ENCODE measurements at regions of chr10 and their contacts with region 1.

Region 1: GRCh38 chr10:70146489-70147258 is at the start of gene TYSND1:
- DNase-seq: no peak
- ATAC-seq: peak; percentile 80
- H3K4me3 Mint-ChIP-seq: peak within 1 kb of the TSS; percentile 95
- H3K27ac Mint-ChIP-seq: peak within 1 kb of the TSS; percentile 96
- H3K4me1 Mint-ChIP-seq: peaks cover 27% of the 10 kb centered on the region
- H3K27me3 Mint-ChIP-seq: no peaks in the 10 kb centered on the region
- CTCF ChIP-seq: no peak
- total RNA-seq, gene TYSND1: 18.2 and 22.0 TPM in 2 replicates

Region 2: GRCh38 chr10:69639291-69640195 is 507.1 kb before region 1 on chr10:
- CTCF ChIA-PET with region 1: no interaction called
- POLR2A ChIA-PET with region 1: no interaction called
- intact Hi-C with region 1: loop called (anchors 10 kb)
- DNase-seq: no peak
- ATAC-seq: peak; percentile 50
- H3K4me3 Mint-ChIP-seq: no peak overlapping the region
- H3K27ac Mint-ChIP-seq: no peak overlapping the region
- H3K4me1 Mint-ChIP-seq: no peaks in the 10 kb centered on the region
- H3K27me3 Mint-ChIP-seq: peaks cover 9% of the 10 kb centered on the region
- CTCF ChIP-seq: no peak

Region 3: GRCh38 chr10:70115948-70116682 is 30.6 kb before region 1 on chr10:
- CTCF ChIA-PET with region 1: interaction called, 49 read pairs
- POLR2A ChIA-PET with region 1: interaction called, 15 read pairs
- intact Hi-C with region 1: loop called (anchors 1 kb)
- DNase-seq: peak; percentile 31
- ATAC-seq: peak; percentile 74
- H3K4me3 Mint-ChIP-seq: no peak overlapping the region
- H3K27ac Mint-ChIP-seq: no peak overlapping the region
- H3K4me1 Mint-ChIP-seq: peaks cover 4% of the 10 kb centered on the region
- H3K27me3 Mint-ChIP-seq: no peaks in the 10 kb centered on the region
- CTCF ChIP-seq: peak; percentile 94

Region 4: DNA sequence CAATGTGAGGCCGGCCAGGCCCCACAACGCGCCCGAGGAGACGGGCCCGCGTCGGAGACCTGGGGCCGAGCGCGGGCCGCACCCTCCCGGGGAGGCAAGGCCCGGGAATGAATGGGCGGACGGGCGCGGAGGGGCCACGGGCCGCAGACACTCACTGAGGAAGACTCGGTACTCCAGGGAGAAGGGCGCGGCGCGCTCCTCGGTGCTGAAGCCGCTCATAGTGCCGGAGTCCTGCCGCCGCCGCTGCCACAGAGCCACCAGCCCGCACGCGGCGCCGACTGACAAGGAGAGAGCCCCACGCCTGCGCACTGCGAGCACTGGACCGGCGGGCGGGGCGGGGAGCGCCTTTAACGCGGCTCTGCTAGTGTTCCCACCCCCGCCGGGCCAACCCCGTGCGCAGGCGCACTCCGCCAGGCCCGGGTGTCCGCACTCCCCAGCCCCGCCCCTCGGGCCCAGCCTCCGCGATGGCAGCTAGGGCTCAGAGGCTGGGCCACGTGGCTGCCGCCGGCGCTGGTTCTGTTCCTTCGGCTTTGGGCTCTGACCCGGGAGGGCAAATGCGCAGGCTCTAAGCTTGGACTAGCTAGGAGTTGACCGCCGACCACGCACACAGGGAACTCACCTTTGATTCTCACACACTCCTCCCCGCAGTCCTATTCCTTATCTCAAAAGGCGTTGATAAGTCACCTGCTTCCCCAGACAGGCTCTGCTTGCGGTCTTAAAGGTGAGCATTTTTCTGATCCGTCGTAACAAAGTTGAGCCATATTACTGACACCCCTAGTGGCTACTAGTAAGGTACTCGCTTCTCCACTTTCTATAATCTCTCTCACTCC is 86.7 kb after region 1 on chr10 and contains the start of gene PPA1:
- CTCF ChIA-PET with region 1: no interaction called
- POLR2A ChIA-PET with region 1: interaction called, 10 read pairs
- intact Hi-C with region 1: loop called (anchors 1 kb)
- DNase-seq: peak; percentile 100
- ATAC-seq: peak; percentile 96
- H3K4me3 Mint-ChIP-seq: peak within 1 kb of the TSS; percentile 92
- H3K27ac Mint-ChIP-seq: peak within 1 kb of the TSS; percentile 92
- H3K4me1 Mint-ChIP-seq: peaks cover 17% of the 10 kb centered on the region
- H3K27me3 Mint-ChIP-seq: no peaks in the 10 kb centered on the region
- CTCF ChIP-seq: no peak
- total RNA-seq, gene PPA1: 107 and 118 TPM in 2 replicates

Region 5: DNA sequence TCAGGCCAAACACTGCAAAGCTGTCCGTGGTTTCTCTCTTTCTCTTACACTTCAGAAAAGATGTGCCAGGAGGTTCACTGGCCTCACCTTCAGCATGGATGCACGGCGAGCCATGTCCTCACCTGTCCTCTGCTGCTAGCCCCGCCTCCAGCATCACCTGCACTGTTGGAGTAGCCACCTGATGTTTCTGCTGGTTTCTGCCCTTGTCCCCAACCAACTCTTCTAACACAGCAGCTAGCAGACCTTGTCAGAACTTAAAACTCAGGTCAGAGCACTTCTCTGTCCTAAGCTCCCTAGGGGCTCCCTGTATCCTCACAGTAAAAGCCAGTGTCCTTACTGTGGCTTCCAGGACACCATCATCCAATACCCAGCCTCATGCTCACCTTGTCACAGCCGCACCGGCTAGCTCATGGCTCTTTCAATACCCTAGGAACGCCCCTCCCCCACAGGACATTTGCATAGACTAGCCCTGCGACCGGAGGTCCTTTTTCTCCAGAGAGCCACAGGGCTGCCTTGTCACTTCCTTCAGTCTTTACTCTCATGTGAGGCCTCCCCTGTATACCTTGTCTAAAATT is 347.1 kb after region 1 on chr10:
- CTCF ChIA-PET with region 1: no interaction called
- POLR2A ChIA-PET with region 1: no interaction called
- intact Hi-C with region 1: loop called (anchors 5 kb)
- DNase-seq: peak; percentile 55
- ATAC-seq: peak; percentile 74
- H3K4me3 Mint-ChIP-seq: peak overlapping the region; percentile 71
- H3K27ac Mint-ChIP-seq: peak overlapping the region; percentile 91
- H3K4me1 Mint-ChIP-seq: peaks cover 77% of the 10 kb centered on the region
- H3K27me3 Mint-ChIP-seq: no peaks in the 10 kb centered on the region
- CTCF ChIP-seq: no peak

Region 6: GRCh38 chr10:70503776-70504175 is 357.1 kb after region 1 on chr10:
- CTCF ChIA-PET with region 1: no interaction called
- POLR2A ChIA-PET with region 1: no interaction called
- intact Hi-C with region 1: no loop called
- DNase-seq: no peak
- ATAC-seq: no peak
- H3K4me3 Mint-ChIP-seq: no peak overlapping the region
- H3K27ac Mint-ChIP-seq: no peak overlapping the region
- H3K4me1 Mint-ChIP-seq: peaks cover 36% of the 10 kb centered on the region
- H3K27me3 Mint-ChIP-seq: no peaks in the 10 kb centered on the region
- CTCF ChIP-seq: no peak